K562 (cell line): ENCODE measurements at regions of chr13 and their contacts with region 1.

Region 1: DNA sequence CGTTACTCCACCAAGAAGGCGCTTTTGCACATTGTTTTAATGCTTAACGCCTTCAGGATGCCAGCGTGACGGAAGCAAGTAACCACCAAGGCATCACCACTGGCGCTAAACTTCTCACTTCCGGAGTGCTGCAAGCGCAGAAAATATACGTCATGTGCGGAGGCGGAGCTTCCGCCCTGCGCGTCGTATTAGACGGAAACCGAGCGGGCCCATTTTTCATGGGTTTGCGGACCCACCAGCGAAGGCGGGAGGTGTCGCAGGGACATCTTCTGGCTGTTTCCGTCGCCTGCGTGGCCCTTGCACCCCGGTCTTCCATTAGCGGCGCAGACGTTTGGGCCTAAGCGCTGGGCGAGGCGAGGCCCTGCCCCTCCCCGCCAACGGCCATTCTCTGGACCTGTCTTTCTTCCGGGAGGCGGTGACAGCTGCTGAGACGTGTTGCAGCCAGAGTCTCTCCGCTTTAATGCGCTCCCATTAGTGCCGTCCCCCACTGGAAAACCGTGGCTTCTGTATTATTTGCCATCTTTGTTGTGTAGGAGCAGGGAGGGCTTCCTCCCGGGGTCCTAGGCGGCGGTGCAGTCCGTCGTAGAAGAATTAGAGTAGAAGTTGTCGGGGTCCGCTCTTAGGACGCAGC is at the start of gene ERCC5:
- DNase-seq: peak; percentile 69 to 95 (median 72)
- ATAC-seq: peak; percentile 95
- H3K4me3 ChIP-seq: peak within 1 kb of the TSS; percentile 99
- H3K27ac ChIP-seq: peak within 1 kb of the TSS; percentile 93
- H3K4me1 ChIP-seq: peaks cover 4 to 6% of the 10 kb centered on the region in 2 experiments; a peak in 3 of 5 replicates
- H3K27me3 ChIP-seq: no peaks in the 10 kb centered on the region
- CTCF ChIP-seq: peak in 2 of 3 experiments; percentile 12 to 24; a peak in 1 of 6 replicates
- EP300 ChIP-seq: peak; percentile 45; the same call in 1 of the 2 replicates
- POLR2A ChIP-seq: peak; percentile 87
- RAD21 ChIP-seq: peak in 1 of 2 experiments; percentile 40; a peak in 2 of 4 replicates
- polyA plus RNA-seq, gene ERCC5: 7.4 to 10.4 TPM

Region 2: GRCh38 chr13:102580552-102581169 is 265.1 kb before region 1 on chr13:
- CTCF ChIA-PET with region 1: interaction called, 4 read pairs
- POLR2A ChIA-PET with region 1: no interaction called
- in situ Hi-C with region 1: no loop called
- intact Hi-C with region 1: loop called (anchors 1 kb)
- DNase-seq: peak; percentile 27 to 69 (median 42)
- ATAC-seq: peak; percentile 84
- H3K4me3 ChIP-seq: no peak overlapping the region
- H3K27ac ChIP-seq: no peak overlapping the region
- H3K4me1 ChIP-seq: peaks cover 0 to 9% of the 10 kb centered on the region in 2 experiments; a peak in 3 of 5 replicates
- H3K27me3 ChIP-seq: no peaks in the 10 kb centered on the region
- CTCF ChIP-seq: peak; percentile 50 to 69 (median 59); a peak in 5 of 6 replicates
- EP300 ChIP-seq: no peak
- POLR2A ChIP-seq: no peak
- RAD21 ChIP-seq: peak; percentile 66 to 87

Region 3: GRCh38 chr13:102596147-102597028 is 249.4 kb before region 1 on chr13 and contains the start of gene TPP2:
- CTCF ChIA-PET with region 1: no interaction called
- POLR2A ChIA-PET with region 1: interaction called, 4 read pairs
- in situ Hi-C with region 1: loop called (anchors 5 kb)
- intact Hi-C with region 1: loop called (anchors 1 kb)
- DNase-seq: peak; percentile 96 to 99 (median 99)
- ATAC-seq: peak; percentile 86
- H3K4me3 ChIP-seq: peak within 1 kb of the TSS; percentile 89
- H3K27ac ChIP-seq: peak within 1 kb of the TSS; percentile 96
- H3K4me1 ChIP-seq: peaks cover 11 to 17% of the 10 kb centered on the region in 2 experiments
- H3K27me3 ChIP-seq: no peaks in the 10 kb centered on the region
- CTCF ChIP-seq: no peak
- EP300 ChIP-seq: 0 out of 2 replicates have a peak, but pooled peaks have one; percentile 4
- POLR2A ChIP-seq: peak; percentile 86
- RAD21 ChIP-seq: no peak
- polyA plus RNA-seq, gene TPP2: 18.8 to 25.8 TPM

Region 4: DNA sequence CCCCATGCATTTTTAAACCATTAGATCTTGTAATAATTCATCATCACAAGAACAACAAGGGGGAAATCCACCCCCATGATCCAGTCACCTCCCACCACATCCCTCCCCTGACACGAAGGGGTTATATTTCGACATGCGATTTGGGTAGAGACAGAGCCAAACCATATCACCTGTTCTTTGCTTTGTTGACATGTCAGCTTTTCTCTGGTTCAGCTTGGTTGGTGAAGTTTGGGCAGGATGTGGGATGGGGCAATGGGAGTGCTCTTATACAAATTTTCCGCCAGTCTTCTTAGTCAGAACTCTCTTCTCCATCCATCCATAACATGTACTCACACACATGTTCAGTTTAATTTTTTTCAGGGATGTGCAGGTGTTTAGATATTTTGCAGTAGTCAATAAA is 236.0 kb before region 1 on chr13:
- CTCF ChIA-PET with region 1: no interaction called
- POLR2A ChIA-PET with region 1: no interaction called
- in situ Hi-C with region 1: no loop called
- intact Hi-C with region 1: no loop called
- DNase-seq: no peak
- ATAC-seq: no peak
- H3K4me3 ChIP-seq: no peak overlapping the region
- H3K27ac ChIP-seq: no peak overlapping the region
- H3K4me1 ChIP-seq: peaks cover 4 to 23% of the 10 kb centered on the region in 2 experiments
- H3K27me3 ChIP-seq: no peaks in the 10 kb centered on the region
- CTCF ChIP-seq: no peak
- EP300 ChIP-seq: no peak
- POLR2A ChIP-seq: no peak
- RAD21 ChIP-seq: no peak

Region 5: GRCh38 chr13:102724923-102725322 is 120.8 kb before region 1 on chr13:
- CTCF ChIA-PET with region 1: no interaction called
- POLR2A ChIA-PET with region 1: interaction called, 3 read pairs
- in situ Hi-C with region 1: no loop called
- intact Hi-C with region 1: loop called (anchors 2 kb)
- DNase-seq: peak in 2 of 4 experiments; percentile 27 to 34
- ATAC-seq: peak; percentile 94
- H3K4me3 ChIP-seq: no peak overlapping the region
- H3K27ac ChIP-seq: no peak overlapping the region
- H3K4me1 ChIP-seq: no peaks in the 10 kb centered on the region
- H3K27me3 ChIP-seq: no peaks in the 10 kb centered on the region
- CTCF ChIP-seq: peak; percentile 37 to 65 (median 52); a peak in 5 of 6 replicates
- EP300 ChIP-seq: no peak
- POLR2A ChIP-seq: no peak
- RAD21 ChIP-seq: peak; percentile 64 to 77

Region 6: GRCh38 chr13:102773441-102774215 is 72.1 kb before region 1 on chr13 and contains the start of gene TEX30:
- CTCF ChIA-PET with region 1: no interaction called
- POLR2A ChIA-PET with region 1: interaction called, 3 read pairs
- in situ Hi-C with region 1: no loop called
- intact Hi-C with region 1: loop called (anchors 2 kb)
- DNase-seq: peak; percentile 83 to 85 (median 84)
- ATAC-seq: peak; percentile 95
- H3K4me3 ChIP-seq: peak within 1 kb of the TSS; percentile 86
- H3K27ac ChIP-seq: peak within 1 kb of the TSS; percentile 88
- H3K4me1 ChIP-seq: peaks cover 13 to 26% of the 10 kb centered on the region in 2 experiments; a peak in 4 of 5 replicates
- H3K27me3 ChIP-seq: no peaks in the 10 kb centered on the region
- CTCF ChIP-seq: no peak
- EP300 ChIP-seq: no peak
- POLR2A ChIP-seq: peak; percentile 84
- RAD21 ChIP-seq: no peak
- polyA plus RNA-seq, gene TEX30: 109 to 143 TPM

Region 7: DNA sequence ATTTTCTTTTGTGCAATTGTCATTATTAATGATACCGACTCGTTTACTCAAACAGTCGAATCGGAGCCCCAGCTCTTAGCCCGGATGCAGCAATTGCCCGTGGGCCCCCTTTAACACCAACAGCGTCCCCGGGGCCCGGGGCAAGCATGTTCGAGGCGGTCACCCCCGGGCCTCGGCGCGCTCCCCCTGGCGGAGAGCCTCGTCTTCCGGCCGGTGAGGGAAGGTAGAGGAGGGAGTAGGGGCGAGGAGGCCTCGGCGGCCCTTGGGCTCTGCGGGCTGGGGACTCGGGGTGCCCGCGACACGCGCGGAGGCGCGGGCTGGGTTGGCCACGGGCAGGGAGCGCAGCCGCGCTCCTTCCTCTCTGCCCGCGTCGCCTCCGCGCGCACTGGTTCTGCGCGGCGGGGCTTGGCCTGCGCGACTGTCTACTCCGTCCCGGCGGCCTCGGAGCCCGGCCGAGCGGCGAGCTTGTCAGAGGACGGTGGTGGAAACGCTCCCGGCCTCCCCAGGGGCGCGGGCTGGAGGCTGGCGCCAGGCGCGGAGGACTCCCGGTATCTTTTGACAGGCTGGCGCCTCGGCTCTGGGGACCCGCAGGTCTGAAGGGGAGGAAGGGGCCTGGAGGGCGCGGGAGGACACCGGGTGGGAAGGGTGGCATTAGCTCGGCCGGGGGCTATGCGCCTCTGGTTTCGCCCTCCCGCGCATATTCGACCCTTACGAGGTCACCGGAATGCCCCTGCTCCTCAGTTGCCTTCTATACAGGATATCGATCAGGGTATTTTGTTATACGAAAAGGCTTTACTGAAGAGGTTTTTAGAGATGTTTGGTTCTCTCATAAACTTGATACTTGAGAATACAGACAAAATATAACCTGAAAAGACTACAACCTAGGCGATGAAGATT is 45.4 kb before region 1 on chr13:
- CTCF ChIA-PET with region 1: no interaction called
- POLR2A ChIA-PET with region 1: interaction called, 3 read pairs
- in situ Hi-C with region 1: no loop called
- intact Hi-C with region 1: loop called (anchors 1 kb)
- DNase-seq: peak; percentile 72 to 83 (median 80)
- ATAC-seq: peak; percentile 88
- H3K4me3 ChIP-seq: peak overlapping the region; percentile 76
- H3K27ac ChIP-seq: peak overlapping the region; percentile 76
- H3K4me1 ChIP-seq: peaks cover 4 to 24% of the 10 kb centered on the region in 2 experiments; a peak in 4 of 5 replicates
- H3K27me3 ChIP-seq: no peaks in the 10 kb centered on the region
- CTCF ChIP-seq: peak; percentile 59 to 75 (median 66)
- EP300 ChIP-seq: no peak; the same call in 1 of the 2 replicates
- POLR2A ChIP-seq: peak; percentile 58; the same call in 1 of the 2 replicates
- RAD21 ChIP-seq: peak; percentile 21 to 31; a peak in 2 of 4 replicates

Region 8: GRCh38 chr13:102903659-102904407 is 58.1 kb after region 1 on chr13:
- CTCF ChIA-PET with region 1: no interaction called
- POLR2A ChIA-PET with region 1: no interaction called
- in situ Hi-C with region 1: no loop called
- intact Hi-C with region 1: no loop called
- DNase-seq: peak; percentile 7 to 22 (median 13)
- ATAC-seq: peak; percentile 72
- H3K4me3 ChIP-seq: no peak overlapping the region
- H3K27ac ChIP-seq: no peak overlapping the region
- H3K4me1 ChIP-seq: no peaks in the 10 kb centered on the region
- H3K27me3 ChIP-seq: no peaks in the 10 kb centered on the region
- CTCF ChIP-seq: peak in 2 of 3 experiments; percentile 16 to 57; a peak in 3 of 6 replicates
- EP300 ChIP-seq: no peak
- POLR2A ChIP-seq: no peak
- RAD21 ChIP-seq: peak; percentile 27 to 59; a peak in 2 of 4 replicates

Region 9: GRCh38 chr13:103406967-103407366 is 561.2 kb after region 1 on chr13:
- CTCF ChIA-PET with region 1: no interaction called
- POLR2A ChIA-PET with region 1: no interaction called
- in situ Hi-C with region 1: no loop called
- intact Hi-C with region 1: no loop called
- DNase-seq: no peak
- ATAC-seq: no peak
- H3K4me3 ChIP-seq: no peak overlapping the region
- H3K27ac ChIP-seq: no peak overlapping the region
- H3K4me1 ChIP-seq: no peaks in the 10 kb centered on the region
- H3K27me3 ChIP-seq: no peaks in the 10 kb centered on the region
- CTCF ChIP-seq: no peak
- EP300 ChIP-seq: no peak
- POLR2A ChIP-seq: no peak
- RAD21 ChIP-seq: no peak